ENCODE measurements at regions of chr13 and their contacts with region 1.

Region 1: DNA sequence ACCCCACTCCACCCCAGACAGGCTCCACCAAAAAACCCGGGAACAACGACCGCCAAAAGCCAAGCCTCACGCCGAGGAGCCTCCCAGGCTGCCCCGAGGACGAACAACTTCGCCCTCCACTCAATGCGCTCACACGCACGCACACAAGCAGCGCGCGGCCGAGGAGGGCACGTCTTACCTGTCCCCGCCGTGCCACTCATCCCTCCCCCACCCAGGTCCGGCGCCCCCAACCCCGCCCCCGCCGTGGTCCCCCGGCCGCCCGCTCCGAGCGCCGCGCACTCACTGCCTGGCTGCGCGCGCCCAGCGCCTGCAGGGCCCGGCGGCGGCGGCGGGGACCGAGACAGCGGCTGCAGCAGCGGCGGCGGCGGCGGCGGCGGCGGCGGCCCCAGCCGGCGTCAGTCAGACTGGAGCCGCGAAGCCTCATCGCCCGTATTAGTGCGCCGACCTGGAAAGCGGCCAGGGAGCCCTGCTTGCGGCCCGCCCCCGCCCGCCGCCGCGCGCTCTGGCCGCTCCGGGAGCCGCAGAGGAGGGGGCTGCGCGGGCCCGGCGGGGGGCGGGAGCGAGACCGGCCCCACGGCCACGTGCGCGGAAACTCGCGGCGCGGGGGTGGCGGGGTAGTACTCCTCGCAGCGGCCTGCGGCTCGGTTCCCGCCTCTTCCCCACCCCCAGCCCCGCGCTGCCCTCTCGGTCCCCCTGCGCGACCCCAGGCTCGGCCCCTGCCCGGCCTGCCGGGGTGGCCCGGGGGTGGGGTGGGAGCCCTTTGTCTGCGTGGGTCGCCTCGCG is at the start of gene SMAD9:
- DNase-seq: peak; percentile 67
- ATAC-seq: peak; percentile 66
- H3K4me3 ChIP-seq: peak within 1 kb of the TSS; percentile 78
- H3K27ac ChIP-seq: peak within 1 kb of the TSS; percentile 79
- H3K4me1 ChIP-seq: peaks cover 8% of the 10 kb centered on the region
- H3K27me3 ChIP-seq: no peaks in the 10 kb centered on the region
- CTCF ChIP-seq: no peak
- POLR2A ChIP-seq: no peak
- RAD21 ChIP-seq: no peak
- total RNA-seq, gene SMAD9: 4.8 and 5.8 TPM in 2 replicates

Region 2: DNA sequence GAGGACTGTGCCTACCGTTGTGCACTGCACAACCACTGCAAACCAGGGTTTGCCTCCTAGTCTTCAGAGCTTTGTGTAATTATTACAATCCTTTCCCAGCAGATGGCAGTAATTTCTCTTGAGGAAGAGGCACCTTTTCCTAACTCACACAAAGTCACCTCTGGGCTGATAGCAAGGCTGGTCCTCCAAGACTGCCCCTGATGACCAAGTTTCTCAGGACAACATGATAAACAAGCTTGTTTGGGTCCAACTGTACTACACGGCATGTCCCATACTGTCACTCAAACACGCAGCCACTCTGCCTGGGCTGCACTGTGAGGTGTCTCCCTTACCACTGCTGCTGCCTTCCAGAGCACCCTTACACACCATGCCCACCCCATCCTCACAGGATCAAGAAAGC is 61.7 kb before region 1 on chr13:
- CTCF ChIA-PET with region 1: no interaction called
- POLR2A ChIA-PET with region 1: no interaction called
- dilution Hi-C with region 1: no loop called
- in situ Hi-C with region 1: no loop called
- intact Hi-C with region 1: loop called (anchors 2 kb)
- DNase-seq: peak; percentile 65
- ATAC-seq: peak; percentile 94
- H3K4me3 ChIP-seq: no peak overlapping the region
- H3K27ac ChIP-seq: no peak overlapping the region
- H3K4me1 ChIP-seq: no peaks in the 10 kb centered on the region; the same call in 1 of the 2 replicates
- H3K27me3 ChIP-seq: no peaks in the 10 kb centered on the region
- CTCF ChIP-seq: peak; percentile 61
- POLR2A ChIP-seq: no peak
- RAD21 ChIP-seq: peak; percentile 70

Region 3: DNA sequence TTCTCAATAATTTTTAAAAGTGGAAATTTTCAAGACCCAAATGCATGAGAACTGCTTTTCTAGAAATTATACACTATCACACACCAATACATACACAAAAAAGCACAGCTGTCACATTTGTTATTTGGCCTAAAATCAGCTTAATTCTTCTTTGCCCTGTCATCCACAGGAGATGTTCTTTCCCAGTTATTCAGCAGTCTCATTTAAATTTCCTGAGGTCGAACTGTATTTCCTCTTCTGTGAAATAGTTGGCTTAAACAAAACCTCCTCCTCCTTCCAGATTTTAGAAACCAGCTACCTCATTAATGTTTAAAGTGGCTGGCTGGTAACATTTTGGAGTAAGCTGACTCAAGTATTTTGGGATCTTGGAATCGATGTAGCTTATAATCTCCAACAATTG is 39.1 kb before region 1 on chr13:
- CTCF ChIA-PET with region 1: no interaction called
- POLR2A ChIA-PET with region 1: no interaction called
- dilution Hi-C with region 1: no loop called
- in situ Hi-C with region 1: no loop called
- intact Hi-C with region 1: loop called (anchors 5 kb)
- DNase-seq: peak; percentile 15
- ATAC-seq: no peak
- H3K4me3 ChIP-seq: no peak overlapping the region
- H3K27ac ChIP-seq: no peak overlapping the region
- H3K4me1 ChIP-seq: peaks cover 6% of the 10 kb centered on the region
- H3K27me3 ChIP-seq: no peaks in the 10 kb centered on the region
- CTCF ChIP-seq: no peak
- POLR2A ChIP-seq: no peak
- RAD21 ChIP-seq: no peak

Region 4: GRCh38 chr13:38419312-38419873 is 1499.4 kb after region 1 on chr13:
- CTCF ChIA-PET with region 1: no interaction called
- POLR2A ChIA-PET with region 1: interaction called, 17 read pairs
- dilution Hi-C with region 1: no loop called
- in situ Hi-C with region 1: no loop called
- intact Hi-C with region 1: no loop called
- DNase-seq: no peak
- ATAC-seq: no peak
- H3K4me3 ChIP-seq: no peak overlapping the region
- H3K27ac ChIP-seq: no peak overlapping the region
- H3K4me1 ChIP-seq: no peaks in the 10 kb centered on the region
- H3K27me3 ChIP-seq: no peaks in the 10 kb centered on the region
- CTCF ChIP-seq: no peak
- POLR2A ChIP-seq: no peak
- RAD21 ChIP-seq: no peak

Measured in IMR-90 (cell line).